ENCODE measurements at regions of chr6 and their contacts with region 1.

Region 1: GRCh38 chr6:107847844-107848802 is 24.0 kb upstream of the SCML4 start:
- DNase-seq: peak; percentile 58
- ATAC-seq: peak; percentile 97
- H3K4me3 ChIP-seq: peak overlapping the region in 2 of 3 experiments; percentile 32 to 66; a peak in 4 of 6 replicates
- H3K27ac ChIP-seq: no peak overlapping the region
- H3K4me1 ChIP-seq: peaks cover 6% of the 10 kb centered on the region
- H3K27me3 ChIP-seq: peaks cover 0 to 14% of the 10 kb centered on the region in 2 experiments; a peak in 3 of 5 replicates
- CTCF ChIP-seq: peak; percentile 96
- EP300 ChIP-seq: no peak
- POLR2A ChIP-seq: no peak
- RAD21 ChIP-seq: peak; percentile 94

Region 2: GRCh38 chr6:107495196-107495643 is 352.9 kb before region 1 on chr6:
- CTCF ChIA-PET with region 1: no interaction called
- POLR2A ChIA-PET with region 1: no interaction called
- in situ Hi-C with region 1: no loop called
- intact Hi-C with region 1: no loop called
- DNase-seq: no peak
- ATAC-seq: no peak
- H3K4me3 ChIP-seq: peak overlapping the region in 2 of 3 experiments; percentile 11 to 94; a peak in 1 of 6 replicates
- H3K27ac ChIP-seq: peak overlapping the region; percentile 82
- H3K4me1 ChIP-seq: peaks cover 63% of the 10 kb centered on the region
- H3K27me3 ChIP-seq: no peaks in the 10 kb centered on the region
- CTCF ChIP-seq: no peak
- EP300 ChIP-seq: no peak
- POLR2A ChIP-seq: no peak
- RAD21 ChIP-seq: no peak

Region 3: GRCh38 chr6:107800564-107801164 is 47.5 kb before region 1 on chr6:
- CTCF ChIA-PET with region 1: no interaction called
- POLR2A ChIA-PET with region 1: no interaction called
- in situ Hi-C with region 1: loop called (anchors 5 kb)
- intact Hi-C with region 1: loop called (anchors 1 kb)
- DNase-seq: peak; percentile 19
- ATAC-seq: peak; percentile 69
- H3K4me3 ChIP-seq: no peak overlapping the region
- H3K27ac ChIP-seq: no peak overlapping the region
- H3K4me1 ChIP-seq: no peaks in the 10 kb centered on the region
- H3K27me3 ChIP-seq: no peaks in the 10 kb centered on the region
- CTCF ChIP-seq: peak; percentile 72
- EP300 ChIP-seq: no peak
- POLR2A ChIP-seq: no peak
- RAD21 ChIP-seq: 0 out of 2 replicates have a peak, but pooled peaks have one; percentile 32

Region 4: DNA sequence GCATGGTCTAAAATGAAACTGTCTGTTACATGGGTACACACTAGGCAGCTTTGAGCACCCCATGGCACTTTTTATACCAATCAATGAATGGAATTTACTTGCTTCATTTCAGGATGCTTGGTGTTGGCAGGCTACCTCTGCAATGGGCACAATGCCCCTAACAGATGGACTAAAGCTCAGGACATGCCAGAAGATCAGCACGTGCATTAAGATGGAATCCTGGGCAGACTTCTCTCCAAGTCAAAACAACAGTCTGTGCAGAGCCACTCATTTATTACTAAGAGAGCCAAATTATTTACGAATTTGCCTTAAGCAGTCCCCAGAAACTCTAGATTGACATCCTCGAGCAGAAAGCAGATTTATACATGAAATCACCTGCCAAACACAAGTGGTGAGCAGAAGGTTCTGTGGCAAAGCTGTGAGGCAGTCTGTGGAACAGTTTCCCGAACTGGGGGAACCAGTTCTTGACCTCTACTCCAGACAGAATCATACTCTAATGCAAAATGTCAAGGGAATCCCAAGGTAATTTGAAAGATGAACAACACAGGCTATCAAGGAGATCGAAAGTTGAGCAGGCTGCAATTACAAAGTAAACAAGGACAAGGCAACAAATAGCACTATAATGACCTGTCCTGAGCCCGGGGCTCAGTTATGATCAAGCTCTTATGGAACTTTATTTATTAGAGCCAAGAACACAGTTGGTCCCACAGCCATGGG is 32.0 kb after region 1 on chr6:
- CTCF ChIA-PET with region 1: no interaction called
- POLR2A ChIA-PET with region 1: no interaction called
- in situ Hi-C with region 1: no loop called
- intact Hi-C with region 1: no loop called
- DNase-seq: no peak
- ATAC-seq: no peak
- H3K4me3 ChIP-seq: no peak overlapping the region
- H3K27ac ChIP-seq: no peak overlapping the region
- H3K4me1 ChIP-seq: peaks cover 25% of the 10 kb centered on the region
- H3K27me3 ChIP-seq: no peaks in the 10 kb centered on the region
- CTCF ChIP-seq: no peak
- EP300 ChIP-seq: no peak
- POLR2A ChIP-seq: no peak
- RAD21 ChIP-seq: no peak

Region 5: GRCh38 chr6:107894821-107895396 is 46.8 kb after region 1 on chr6:
- CTCF ChIA-PET with region 1: no interaction called
- POLR2A ChIA-PET with region 1: no interaction called
- in situ Hi-C with region 1: no loop called
- intact Hi-C with region 1: no loop called
- DNase-seq: no peak
- ATAC-seq: no peak
- H3K4me3 ChIP-seq: no peak overlapping the region
- H3K27ac ChIP-seq: no peak overlapping the region
- H3K4me1 ChIP-seq: no peaks in the 10 kb centered on the region
- H3K27me3 ChIP-seq: no peaks in the 10 kb centered on the region
- CTCF ChIP-seq: no peak
- EP300 ChIP-seq: no peak
- POLR2A ChIP-seq: no peak
- RAD21 ChIP-seq: no peak

Region 6: DNA sequence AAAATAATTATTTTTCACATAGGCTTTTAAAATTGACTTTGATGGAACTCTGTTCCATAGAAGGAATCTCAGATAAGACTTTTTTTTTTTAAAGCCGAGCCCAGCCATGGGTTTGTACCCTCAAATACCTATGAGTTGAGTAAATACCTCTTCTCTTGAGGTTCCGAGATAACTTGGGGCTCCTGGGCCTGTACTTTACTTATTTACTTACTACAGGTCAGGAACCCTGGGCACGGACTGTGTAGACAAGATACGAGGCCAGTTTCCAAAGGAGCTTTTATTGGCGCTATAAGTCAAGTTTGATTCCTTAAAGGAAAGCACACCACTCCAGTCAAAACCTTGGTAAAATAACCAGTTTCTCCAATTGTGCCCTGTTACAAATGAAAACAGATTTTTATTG is 454.3 kb after region 1 on chr6:
- CTCF ChIA-PET with region 1: no interaction called
- POLR2A ChIA-PET with region 1: no interaction called
- in situ Hi-C with region 1: no loop called
- intact Hi-C with region 1: no loop called
- DNase-seq: no peak
- ATAC-seq: no peak
- H3K4me3 ChIP-seq: no peak overlapping the region
- H3K27ac ChIP-seq: no peak overlapping the region
- H3K4me1 ChIP-seq: 0 out of 2 replicates have a peak, but pooled peaks cover 9% of the 10 kb centered on the region
- H3K27me3 ChIP-seq: no peaks in the 10 kb centered on the region
- CTCF ChIP-seq: no peak
- EP300 ChIP-seq: no peak
- POLR2A ChIP-seq: no peak
- RAD21 ChIP-seq: no peak

Measured in HepG2 (cell line).